Activated CD8-positive, alpha-beta T cell treated with anti-CD3 and anti-CD28 coated beads for 36 hours (primary cell): ENCODE measurements at regions of chr3 and their contacts with region 1.

Region 1: DNA sequence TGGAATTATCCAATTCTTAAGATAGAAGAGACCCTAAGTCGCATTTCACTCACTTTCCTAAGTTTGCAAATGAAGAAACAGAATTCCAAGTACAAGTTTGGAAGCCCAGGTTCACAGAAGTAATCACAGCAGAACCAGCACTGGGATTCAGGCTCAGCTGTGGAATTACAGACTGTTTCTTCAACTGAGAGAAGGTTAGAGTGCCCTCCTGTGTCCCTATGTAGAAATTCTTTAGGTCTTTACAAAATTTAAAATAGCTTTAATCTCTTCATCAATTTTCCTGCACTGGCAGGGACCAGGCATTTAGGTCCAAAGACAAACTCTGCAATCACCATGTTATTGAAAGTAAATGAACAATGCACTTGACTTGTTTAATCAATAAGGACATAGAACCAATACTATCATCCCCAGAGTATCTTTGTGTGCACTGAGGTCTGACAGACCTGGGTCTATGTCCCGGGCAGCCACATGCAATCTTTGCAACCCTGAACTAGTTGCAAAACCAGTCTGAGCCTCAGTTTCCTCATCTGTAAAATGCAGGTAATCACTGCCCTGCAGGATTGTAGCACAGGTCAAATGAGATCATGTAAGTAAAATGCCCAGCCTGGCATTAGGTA is 96.3 kb upstream of the ZBED2 start:
- DNase-seq: no peak
- ATAC-seq: no peak
- H3K4me3 Mint-ChIP-seq: no peak overlapping the region
- H3K27ac Mint-ChIP-seq: no peak overlapping the region
- H3K4me1 Mint-ChIP-seq: peaks cover 75% of the 10 kb centered on the region
- H3K27me3 Mint-ChIP-seq: no peaks in the 10 kb centered on the region
- CTCF ChIP-seq: peak; percentile 18

Region 2: GRCh38 chr3:111577794-111578685 is 113.4 kb before region 1 on chr3:
- CTCF ChIA-PET with region 1: interaction called, 10 read pairs
- POLR2A ChIA-PET with region 1: no interaction called
- intact Hi-C with region 1: no loop called
- DNase-seq: no peak
- ATAC-seq: peak; percentile 88
- H3K4me3 Mint-ChIP-seq: no peak overlapping the region
- H3K27ac Mint-ChIP-seq: peak overlapping the region; percentile 73
- H3K4me1 Mint-ChIP-seq: peaks cover 80% of the 10 kb centered on the region
- H3K27me3 Mint-ChIP-seq: no peaks in the 10 kb centered on the region
- CTCF ChIP-seq: peak; percentile 64

Region 3: DNA sequence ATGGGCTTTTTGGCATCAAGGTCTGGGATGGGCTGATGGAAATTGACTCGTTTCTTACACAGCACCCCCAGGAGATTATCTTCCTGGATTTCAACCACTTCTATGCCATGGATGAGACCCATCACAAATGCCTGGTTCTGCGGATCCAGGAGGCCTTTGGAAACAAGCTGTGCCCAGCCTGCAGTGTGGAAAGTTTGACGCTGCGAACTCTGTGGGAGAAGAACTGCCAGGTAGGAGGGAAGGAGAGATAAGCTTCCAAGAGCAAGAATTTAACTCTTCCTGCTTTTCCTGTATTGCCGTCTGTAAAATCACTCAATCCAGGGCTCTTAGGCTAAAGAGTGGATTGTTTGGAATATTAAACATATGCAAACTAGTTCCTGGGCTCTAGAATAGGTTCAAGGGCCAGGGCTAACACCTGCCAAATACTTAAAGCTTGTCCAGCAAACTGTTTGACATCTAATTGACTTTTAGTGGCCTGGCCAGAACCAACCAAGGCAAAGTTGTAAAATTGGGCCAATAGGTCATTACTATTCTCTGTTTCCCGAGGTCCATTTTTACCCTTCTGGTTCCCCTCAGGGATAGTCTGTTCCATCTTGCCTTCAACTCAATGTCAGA is 16.9 kb after region 1 on chr3:
- CTCF ChIA-PET with region 1: interaction called, 18 read pairs
- POLR2A ChIA-PET with region 1: no interaction called
- intact Hi-C with region 1: no loop called
- DNase-seq: no peak
- ATAC-seq: no peak
- H3K4me3 Mint-ChIP-seq: no peak overlapping the region
- H3K27ac Mint-ChIP-seq: no peak overlapping the region
- H3K4me1 Mint-ChIP-seq: peaks cover 35% of the 10 kb centered on the region
- H3K27me3 Mint-ChIP-seq: no peaks in the 10 kb centered on the region
- CTCF ChIP-seq: no peak

Region 4: DNA sequence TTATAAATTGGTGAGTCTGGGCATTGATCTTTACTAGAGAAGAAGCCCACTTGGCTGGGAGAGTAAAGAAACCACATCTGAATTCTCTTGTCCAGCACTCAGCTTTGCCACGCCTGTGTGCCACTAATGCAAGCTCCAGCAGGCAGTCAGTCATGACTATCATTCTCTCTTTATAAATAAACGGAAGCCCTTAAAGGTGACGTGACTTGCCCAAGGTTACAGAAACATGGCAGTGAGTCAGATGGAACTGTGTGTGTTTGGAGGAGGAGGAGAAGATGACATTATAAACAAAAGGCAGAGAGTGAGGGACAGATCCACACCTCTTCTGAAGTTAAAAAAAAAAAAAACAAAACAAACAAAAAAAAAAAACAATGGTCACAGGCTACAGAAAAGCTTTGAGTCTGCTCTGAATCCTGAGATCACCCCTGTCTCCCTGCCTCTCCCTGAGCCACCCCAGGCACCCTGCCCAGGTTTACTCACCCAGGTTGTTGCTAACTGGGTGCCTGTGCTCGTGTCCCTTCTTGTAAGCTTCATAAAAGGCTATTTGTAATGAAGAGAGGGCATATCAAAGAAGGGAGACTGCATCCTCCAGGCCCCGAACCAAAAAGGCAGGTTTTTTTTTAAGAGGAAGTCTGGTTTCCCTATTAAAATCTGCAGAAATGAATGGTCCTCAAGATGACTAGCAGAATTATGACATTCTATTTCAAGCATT is 48.0 kb after region 1 on chr3:
- CTCF ChIA-PET with region 1: no interaction called
- POLR2A ChIA-PET with region 1: no interaction called
- intact Hi-C with region 1: no loop called
- DNase-seq: no peak
- ATAC-seq: no peak
- H3K4me3 Mint-ChIP-seq: no peak overlapping the region
- H3K27ac Mint-ChIP-seq: no peak overlapping the region
- H3K4me1 Mint-ChIP-seq: peaks cover 20% of the 10 kb centered on the region
- H3K27me3 Mint-ChIP-seq: no peaks in the 10 kb centered on the region
- CTCF ChIP-seq: no peak

Region 5: DNA sequence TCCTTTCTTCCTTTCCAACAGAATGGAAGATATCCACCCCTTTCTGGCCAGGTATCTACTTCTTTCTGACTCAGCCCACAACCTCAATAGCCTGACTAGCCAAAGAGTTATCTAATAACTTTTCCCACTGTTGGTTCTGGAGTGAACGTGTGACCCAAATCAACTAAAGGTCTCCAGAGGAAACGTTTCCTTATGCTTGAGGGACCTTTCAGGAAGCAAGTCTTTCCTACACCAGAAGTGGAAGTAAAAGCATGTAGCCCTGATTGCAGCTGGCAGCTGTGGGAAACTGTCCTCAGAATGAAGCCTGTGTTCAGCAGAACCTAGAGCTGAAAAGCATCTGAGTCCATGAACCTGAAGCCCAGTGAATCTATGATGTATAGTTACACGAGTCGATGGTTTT is 132.9 kb after region 1 on chr3:
- CTCF ChIA-PET with region 1: no interaction called
- POLR2A ChIA-PET with region 1: no interaction called
- intact Hi-C with region 1: no loop called
- DNase-seq: no peak
- ATAC-seq: no peak
- H3K4me3 Mint-ChIP-seq: no peak overlapping the region
- H3K27ac Mint-ChIP-seq: no peak overlapping the region
- H3K4me1 Mint-ChIP-seq: peaks cover 4% of the 10 kb centered on the region
- H3K27me3 Mint-ChIP-seq: no peaks in the 10 kb centered on the region
- CTCF ChIP-seq: no peak